ENCODE measurements at regions of chr1 and their contacts with region 1.

Region 1: DNA sequence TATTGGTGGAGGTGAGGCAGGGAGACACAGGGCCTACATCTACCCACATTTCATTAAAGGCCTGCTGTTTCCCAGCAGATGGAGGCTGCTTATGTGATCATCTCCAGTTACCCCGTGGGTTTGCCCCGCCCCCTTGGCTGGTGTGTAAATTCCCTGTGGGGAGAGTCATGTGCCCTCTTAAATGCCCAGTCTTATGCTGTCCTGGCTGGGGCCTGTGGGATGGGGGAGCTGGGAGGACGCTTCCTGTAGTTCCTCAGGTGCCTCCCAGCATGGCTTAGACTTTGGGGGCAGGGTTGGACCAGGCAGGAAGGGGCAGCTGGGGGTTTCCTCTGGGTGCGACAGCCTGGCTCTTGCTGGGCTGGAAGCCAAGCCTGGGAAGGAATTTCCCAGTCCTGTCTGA is 15.5 kb upstream of the CITED4 start:
- DNase-seq: peak; percentile 93
- H3K4me3 ChIP-seq: no peak overlapping the region
- H3K27ac ChIP-seq: peak overlapping the region; percentile 89
- H3K4me1 ChIP-seq: peaks cover 72% of the 10 kb centered on the region
- H3K27me3 ChIP-seq: no peaks in the 10 kb centered on the region
- CTCF ChIP-seq: no peak

Region 2: DNA sequence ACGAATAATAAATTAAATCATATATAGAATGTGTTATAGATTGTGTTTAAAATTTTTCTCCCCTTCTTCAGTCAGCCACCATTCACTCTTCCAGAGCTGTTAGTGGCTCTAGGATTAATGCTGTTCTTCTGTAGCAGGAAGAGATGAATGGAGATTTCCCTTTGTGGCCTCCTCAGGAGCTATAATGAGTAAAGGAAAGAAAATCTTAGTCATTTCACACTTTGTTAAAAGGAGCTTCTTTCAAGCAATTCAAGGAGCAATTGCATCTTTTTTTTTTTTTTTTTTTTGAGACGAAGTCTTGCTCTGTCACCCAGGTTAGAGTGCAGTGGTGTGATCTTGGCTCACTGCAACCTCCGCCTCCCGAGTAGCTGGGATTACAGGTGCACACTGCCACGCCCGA is 653.7 kb before region 1 on chr1:
- CTCF ChIA-PET with region 1: interaction called, 13 read pairs
- dilution Hi-C with region 1: no loop called
- in situ Hi-C with region 1: no loop called
- intact Hi-C with region 1: no loop called
- DNase-seq: no peak
- H3K4me3 ChIP-seq: no peak overlapping the region
- H3K27ac ChIP-seq: no peak overlapping the region
- H3K4me1 ChIP-seq: no peaks in the 10 kb centered on the region
- H3K27me3 ChIP-seq: no peaks in the 10 kb centered on the region
- CTCF ChIP-seq: no peak

Region 3: DNA sequence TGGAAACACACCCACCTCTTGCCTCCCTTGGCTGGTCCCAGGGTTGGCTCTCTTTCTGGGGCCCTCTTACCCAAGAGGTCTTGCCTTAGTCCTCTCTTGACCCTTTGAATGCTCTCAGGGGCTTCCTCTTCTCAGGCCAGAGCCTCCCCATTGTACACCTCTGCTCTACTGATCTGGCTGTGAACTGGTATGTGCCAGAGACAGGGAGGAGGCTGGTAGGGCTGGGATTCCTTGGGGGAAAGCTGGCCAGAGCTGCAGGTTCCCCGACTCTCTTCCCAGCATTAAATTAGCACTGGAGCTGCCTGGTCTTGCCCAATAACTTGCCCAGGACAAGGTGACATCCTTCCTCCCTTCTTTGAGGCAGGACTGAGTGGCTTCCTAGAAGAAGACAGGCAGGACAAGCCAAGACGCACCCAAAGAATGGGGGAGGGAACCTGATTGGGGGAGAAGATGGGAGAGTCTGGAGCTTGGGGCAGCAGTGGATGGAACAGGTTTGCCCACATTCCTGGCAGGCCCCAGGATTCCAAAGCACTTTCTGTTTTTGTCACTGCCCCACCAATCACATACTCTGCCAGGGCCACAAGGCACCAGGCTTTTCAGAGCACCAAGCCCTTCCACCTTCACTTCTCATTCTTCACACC is 21.7 kb after region 1 on chr1:
- CTCF ChIA-PET with region 1: interaction called, 4 read pairs
- dilution Hi-C with region 1: no loop called
- in situ Hi-C with region 1: no loop called
- intact Hi-C with region 1: loop called (anchors 1 kb)
- DNase-seq: peak; percentile 95
- H3K4me3 ChIP-seq: no peak overlapping the region
- H3K27ac ChIP-seq: peak overlapping the region; percentile 79
- H3K4me1 ChIP-seq: peaks cover 55% of the 10 kb centered on the region
- H3K27me3 ChIP-seq: no peaks in the 10 kb centered on the region
- CTCF ChIP-seq: no peak